GM12878 (cell line): ENCODE measurements at regions of chr2 and their contacts with region 1.

Region 1: DNA sequence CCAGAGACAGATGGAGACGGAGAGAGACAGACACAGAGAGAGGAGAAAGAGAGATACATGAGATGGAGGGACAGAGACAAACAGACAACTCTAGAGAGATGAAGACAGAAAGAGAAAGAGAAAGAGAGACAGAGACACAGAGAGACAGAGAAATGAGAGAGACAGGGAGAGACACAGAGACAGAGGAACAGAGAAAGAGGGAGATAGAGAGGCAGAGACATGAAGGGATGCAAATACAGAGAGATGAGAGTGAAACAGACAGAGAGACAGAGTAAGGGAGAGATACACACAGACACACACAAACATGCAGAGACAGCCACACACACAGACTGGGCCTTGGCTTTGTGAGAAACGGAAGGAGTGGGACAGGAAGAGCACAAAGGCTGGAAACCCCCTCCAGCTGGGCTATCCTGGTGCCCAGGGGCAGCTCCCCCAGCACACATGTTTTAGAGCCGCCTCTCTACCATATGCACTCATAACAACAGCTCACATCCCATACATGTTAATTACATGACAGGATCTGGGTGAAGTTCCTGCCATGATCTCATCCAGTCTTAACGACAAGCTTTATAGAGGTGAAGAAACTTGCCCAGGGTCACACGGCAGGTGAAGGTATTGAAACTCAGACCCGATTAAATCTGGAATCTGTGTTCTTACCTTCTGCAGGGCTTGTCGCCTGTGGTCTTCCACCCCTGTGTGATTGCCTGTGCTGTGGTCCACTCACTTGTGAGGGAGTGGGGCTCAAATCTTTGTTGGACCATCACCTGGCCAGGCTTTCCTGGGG is 32.4 kb downstream of the IL18R1 start:
- DNase-seq: peak; percentile 51
- ATAC-seq: peak; percentile 90
- H3K4me3 ChIP-seq: peak overlapping the region; percentile 17; the same call in 1 of the 2 replicates
- H3K27ac ChIP-seq: peak overlapping the region; percentile 56
- H3K4me1 ChIP-seq: peaks cover 29% of the 10 kb centered on the region
- H3K27me3 ChIP-seq: no peaks in the 10 kb centered on the region
- CTCF ChIP-seq: no peak
- EP300 ChIP-seq: no peak
- POLR2A ChIP-seq: no peak
- RAD21 ChIP-seq: no peak

Region 2: GRCh38 chr2:102321941-102322719 is 65.8 kb before region 1 on chr2:
- CTCF ChIA-PET with region 1: no interaction called
- POLR2A ChIA-PET with region 1: no interaction called
- RAD21 ChIA-PET with region 1: no interaction called
- SMC1A ChIA-PET with region 1: no interaction called
- in situ Hi-C with region 1: no loop called
- intact Hi-C with region 1: no loop called
- DNase-seq: no peak
- ATAC-seq: no peak
- H3K4me3 ChIP-seq: no peak overlapping the region
- H3K27ac ChIP-seq: no peak overlapping the region
- H3K4me1 ChIP-seq: no peaks in the 10 kb centered on the region
- H3K27me3 ChIP-seq: peaks cover 0 to 2% of the 10 kb centered on the region in 2 experiments; a peak in 2 of 4 replicates
- CTCF ChIP-seq: no peak
- EP300 ChIP-seq: no peak
- POLR2A ChIP-seq: no peak
- RAD21 ChIP-seq: no peak

Region 3: GRCh38 chr2:102412199-102412598 is 24.2 kb after region 1 on chr2:
- CTCF ChIA-PET with region 1: interaction called, 3 read pairs
- POLR2A ChIA-PET with region 1: no interaction called
- RAD21 ChIA-PET with region 1: no interaction called
- SMC1A ChIA-PET with region 1: interaction called, 4 read pairs
- in situ Hi-C with region 1: no loop called
- intact Hi-C with region 1: loop called (anchors 2 kb)
- DNase-seq: no peak
- ATAC-seq: no peak
- H3K4me3 ChIP-seq: no peak overlapping the region
- H3K27ac ChIP-seq: no peak overlapping the region
- H3K4me1 ChIP-seq: no peaks in the 10 kb centered on the region
- H3K27me3 ChIP-seq: no peaks in the 10 kb centered on the region
- CTCF ChIP-seq: no peak
- EP300 ChIP-seq: no peak
- POLR2A ChIP-seq: no peak
- RAD21 ChIP-seq: no peak